Posterior cingulate gyrus (tissue), 11 donors: ENCODE measurements at regions of chr1 and their contacts with region 1.

Region 1: GRCh38 chr1:13748610-13749505 is 48.9 kb downstream of the PRDM2 start:
- DNase-seq: peak; percentile 95 to 100 (median 98)

Region 2: DNA sequence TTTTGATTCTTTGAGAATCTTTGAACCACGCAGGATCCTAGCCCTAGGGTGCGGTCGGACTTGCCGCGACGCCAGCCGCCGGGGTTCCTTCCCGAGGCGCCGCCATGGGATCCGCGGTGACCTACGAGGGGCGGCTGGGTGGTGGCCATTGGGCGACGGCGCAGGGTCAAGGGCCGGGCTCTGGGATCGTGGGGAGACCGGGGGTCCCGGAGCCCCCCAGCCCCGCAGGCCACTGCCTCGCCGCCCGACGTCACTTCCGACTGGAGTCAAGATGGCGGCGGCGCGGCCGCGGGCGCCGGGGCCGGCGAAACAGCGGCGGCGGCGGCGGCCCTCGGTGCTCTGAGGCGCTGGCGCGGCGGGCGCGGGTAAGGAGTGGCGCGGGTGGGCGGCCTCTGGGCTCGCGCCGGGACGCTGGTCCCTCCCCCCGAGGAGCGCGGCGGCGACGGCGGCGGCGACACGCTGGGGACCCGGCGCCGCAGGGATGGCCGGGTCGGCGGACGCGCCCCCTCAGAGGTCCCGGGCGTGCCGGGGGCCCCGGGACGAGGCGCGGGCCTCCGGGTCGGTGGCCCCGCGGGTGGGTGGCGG is 48.8 kb before region 1 on chr1 and contains the start of gene PRDM2:
- intact Hi-C with region 1: loop called (anchors 1 kb)
- DNase-seq: peak in 9 of 10 donors; percentile 21 to 92 (median 50)